ENCODE measurements at regions of chr6 and their contacts with region 1.

Region 1: GRCh38 chr6:6357032-6357431 is 36.6 kb upstream of the F13A1 start:
- DNase-seq: no peak

Region 2: GRCh38 chr6:6052216-6052615 is 304.8 kb before region 1 on chr6:
- intact Hi-C with region 1: no loop called
- DNase-seq: no peak

Region 3: GRCh38 chr6:6315660-6316059 is 41.4 kb before region 1 on chr6:
- intact Hi-C with region 1: loop called in 1 of 2 experiments (anchors 2 kb)
- DNase-seq: no peak

Measured in posterior vena cava (tissue), 2 donors.